ENCODE measurements at regions of chr3 and their contacts with region 1.

Region 1: GRCh38 chr3:179147873-179148615 is at the start of gene PIK3CA:
- DNase-seq: peak; percentile 71 to 99 (median 95)
- ATAC-seq: peak; percentile 88
- H3K4me3 ChIP-seq: peak within 1 kb of the TSS; percentile 87
- H3K4me3 Mint-ChIP-seq: peak within 1 kb of the TSS in 7 of 10 donors; percentile 95 to 100 (median 97)
- H3K27ac ChIP-seq: peak within 1 kb of the TSS; percentile 93
- H3K27ac Mint-ChIP-seq: peak within 1 kb of the TSS in 8 of 9 donors; percentile 94 to 99 (median 96)
- H3K4me1 ChIP-seq: peaks cover 15 to 17% of the 10 kb centered on the region in 2 donors
- H3K4me1 Mint-ChIP-seq: peaks cover 27 to 47% (median 41%) of the 10 kb centered on the region in 7 donors
- H3K27me3 ChIP-seq: no peaks in the 10 kb centered on the region
- H3K27me3 Mint-ChIP-seq: peaks cover 0 to 21% (median 0%) of the 10 kb centered on the region in 5 donors
- total RNA-seq, gene PIK3CA: 27.4 to 58.1 (median 43.7) TPM

Region 2: GRCh38 chr3:179015551-179016020 is 132.5 kb before region 1 on chr3:
- CTCF ChIA-PET with region 1: interaction called, 7 read pairs
- POLR2A ChIA-PET with region 1: interaction called, 23 read pairs
- intact Hi-C with region 1: loop called (anchors 1 kb)
- DNase-seq: peak in 8 of 9 donors; percentile 41 to 87 (median 82)
- ATAC-seq: peak; percentile 99
- H3K4me3 ChIP-seq: no peak overlapping the region
- H3K4me3 Mint-ChIP-seq: peak overlapping the region in 1 of 10 donors; percentile 35
- H3K27ac ChIP-seq: no peak overlapping the region
- H3K27ac Mint-ChIP-seq: peak overlapping the region in 5 of 9 donors; percentile 2 to 53 (median 32)
- H3K4me1 ChIP-seq: peaks cover 0 to 20% of the 10 kb centered on the region in 2 donors
- H3K4me1 Mint-ChIP-seq: peaks cover 15 to 42% (median 41%) of the 10 kb centered on the region in 7 donors
- H3K27me3 ChIP-seq: no peaks in the 10 kb centered on the region
- H3K27me3 Mint-ChIP-seq: peaks cover 0 to 19% (median 0%) of the 10 kb centered on the region in 5 donors

Region 3: GRCh38 chr3:179105881-179106280 is 42.2 kb before region 1 on chr3:
- CTCF ChIA-PET with region 1: interaction called, 3 read pairs
- POLR2A ChIA-PET with region 1: interaction called, 5 read pairs
- intact Hi-C with region 1: loop called (anchors 1 kb)
- DNase-seq: no peak
- ATAC-seq: no peak
- H3K4me3 ChIP-seq: no peak overlapping the region
- H3K4me3 Mint-ChIP-seq: no peak overlapping the region
- H3K27ac ChIP-seq: no peak overlapping the region
- H3K27ac Mint-ChIP-seq: peak overlapping the region in 1 of 9 donors; percentile 84
- H3K4me1 ChIP-seq: no peaks in the 10 kb centered on the region
- H3K4me1 Mint-ChIP-seq: peaks cover 0 to 5% (median 3%) of the 10 kb centered on the region in 7 donors
- H3K27me3 ChIP-seq: no peaks in the 10 kb centered on the region
- H3K27me3 Mint-ChIP-seq: peaks cover 0 to 12% (median 5%) of the 10 kb centered on the region in 5 donors

Region 4: GRCh38 chr3:179196098-179196497 is 48.1 kb after region 1 on chr3:
- CTCF ChIA-PET with region 1: no interaction called
- POLR2A ChIA-PET with region 1: interaction called, 12 read pairs
- intact Hi-C with region 1: loop called (anchors 1 kb)
- DNase-seq: peak in 7 of 9 donors; percentile 49 to 72 (median 53)
- ATAC-seq: peak; percentile 78
- H3K4me3 ChIP-seq: no peak overlapping the region
- H3K4me3 Mint-ChIP-seq: peak overlapping the region in 5 of 10 donors; percentile 21 to 79 (median 50)
- H3K27ac ChIP-seq: no peak overlapping the region
- H3K27ac Mint-ChIP-seq: peak overlapping the region in 8 of 9 donors; percentile 12 to 88 (median 53)
- H3K4me1 ChIP-seq: peaks cover 4 to 23% of the 10 kb centered on the region in 2 donors
- H3K4me1 Mint-ChIP-seq: peaks cover 22 to 67% (median 63%) of the 10 kb centered on the region in 7 donors
- H3K27me3 ChIP-seq: no peaks in the 10 kb centered on the region
- H3K27me3 Mint-ChIP-seq: no peaks in the 10 kb centered on the region

Region 5: GRCh38 chr3:179347345-179348194 is 199.5 kb after region 1 on chr3 and contains the start of gene MFN1:
- CTCF ChIA-PET with region 1: no interaction called
- POLR2A ChIA-PET with region 1: interaction called, 19 read pairs
- intact Hi-C with region 1: loop called (anchors 1 kb)
- DNase-seq: peak; percentile 69 to 91 (median 88)
- ATAC-seq: peak; percentile 99
- H3K4me3 ChIP-seq: peak within 1 kb of the TSS; percentile 99
- H3K4me3 Mint-ChIP-seq: peak within 1 kb of the TSS; percentile 97 to 100 (median 98)
- H3K27ac ChIP-seq: peak within 1 kb of the TSS; percentile 81
- H3K27ac Mint-ChIP-seq: peak within 1 kb of the TSS; percentile 84 to 98 (median 94)
- H3K4me1 ChIP-seq: peaks cover 8 to 13% of the 10 kb centered on the region in 2 donors
- H3K4me1 Mint-ChIP-seq: peaks cover 7 to 39% (median 28%) of the 10 kb centered on the region in 7 donors
- H3K27me3 ChIP-seq: no peaks in the 10 kb centered on the region
- H3K27me3 Mint-ChIP-seq: no peaks in the 10 kb centered on the region
- total RNA-seq, gene MFN1: 32.2 to 58.1 (median 40.3) TPM

Region 6: GRCh38 chr3:179653096-179653797 is 505.2 kb after region 1 on chr3:
- CTCF ChIA-PET with region 1: no interaction called
- POLR2A ChIA-PET with region 1: interaction called, 3 read pairs
- intact Hi-C with region 1: loop called (anchors 1 to 2 kb)
- DNase-seq: peak; percentile 46 to 74 (median 71)
- ATAC-seq: peak; percentile 71
- H3K4me3 ChIP-seq: peak overlapping the region; percentile 83
- H3K4me3 Mint-ChIP-seq: peak overlapping the region; percentile 87 to 98 (median 94)
- H3K27ac ChIP-seq: peak overlapping the region; percentile 74
- H3K27ac Mint-ChIP-seq: peak overlapping the region; percentile 84 to 90 (median 87)
- H3K4me1 ChIP-seq: peaks cover 0 to 7% of the 10 kb centered on the region in 2 donors
- H3K4me1 Mint-ChIP-seq: peaks cover 20 to 55% (median 41%) of the 10 kb centered on the region in 7 donors
- H3K27me3 ChIP-seq: no peaks in the 10 kb centered on the region
- H3K27me3 Mint-ChIP-seq: peaks cover 0 to 19% (median 0%) of the 10 kb centered on the region in 5 donors